WTC11 (cell line): ENCODE measurements at regions of chr13 and their contacts with region 1.

Region 1: DNA sequence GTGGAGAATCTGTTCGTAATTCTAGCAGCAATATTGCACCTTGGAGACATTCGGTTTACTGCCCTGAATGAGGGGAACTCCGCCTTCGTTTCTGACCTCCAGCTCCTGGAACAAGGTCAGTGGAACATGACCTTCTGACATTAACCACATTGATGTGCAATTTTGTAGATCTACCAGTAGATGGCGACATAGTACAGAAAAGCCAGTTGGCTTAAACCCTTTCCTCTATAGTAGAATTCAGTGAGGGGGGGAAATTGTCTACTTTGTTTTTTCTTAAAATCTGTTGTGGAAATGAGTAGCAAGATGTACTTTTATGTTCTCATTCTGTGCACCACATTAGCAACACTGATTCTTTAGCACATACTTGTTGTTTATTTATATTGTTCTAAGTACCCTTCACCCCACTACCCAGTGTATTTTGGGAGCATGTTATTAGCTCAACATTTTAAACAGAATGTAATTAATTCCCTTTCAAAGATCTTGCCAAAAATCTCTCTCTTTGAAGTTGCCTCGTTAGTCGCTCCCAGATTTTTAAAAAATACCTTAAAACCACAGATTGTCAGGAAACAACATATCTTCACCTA is 332.2 kb downstream of the MYO16 start:
- DNase-seq: no peak
- ATAC-seq: peak; percentile 88
- H3K4me3 Mint-ChIP-seq: no peak overlapping the region
- H3K27ac Mint-ChIP-seq: no peak overlapping the region
- H3K4me1 Mint-ChIP-seq: peaks cover 4% of the 10 kb centered on the region
- H3K27me3 Mint-ChIP-seq: no peaks in the 10 kb centered on the region
- CTCF ChIP-seq: peak; percentile 84

Region 2: GRCh38 chr13:108915634-108916512 is 45.8 kb before region 1 on chr13:
- CTCF ChIA-PET with region 1: interaction called, 14 read pairs
- POLR2A ChIA-PET with region 1: no interaction called
- DNase-seq: peak; percentile 47
- ATAC-seq: no peak; the same call in 1 of the 2 replicates
- H3K4me3 Mint-ChIP-seq: no peak overlapping the region
- H3K27ac Mint-ChIP-seq: 0 out of 2 replicates have a peak overlapping the region, but pooled peaks have one; percentile 25
- H3K4me1 Mint-ChIP-seq: peaks cover 26% of the 10 kb centered on the region
- H3K27me3 Mint-ChIP-seq: no peaks in the 10 kb centered on the region
- CTCF ChIP-seq: no peak

Region 3: DNA sequence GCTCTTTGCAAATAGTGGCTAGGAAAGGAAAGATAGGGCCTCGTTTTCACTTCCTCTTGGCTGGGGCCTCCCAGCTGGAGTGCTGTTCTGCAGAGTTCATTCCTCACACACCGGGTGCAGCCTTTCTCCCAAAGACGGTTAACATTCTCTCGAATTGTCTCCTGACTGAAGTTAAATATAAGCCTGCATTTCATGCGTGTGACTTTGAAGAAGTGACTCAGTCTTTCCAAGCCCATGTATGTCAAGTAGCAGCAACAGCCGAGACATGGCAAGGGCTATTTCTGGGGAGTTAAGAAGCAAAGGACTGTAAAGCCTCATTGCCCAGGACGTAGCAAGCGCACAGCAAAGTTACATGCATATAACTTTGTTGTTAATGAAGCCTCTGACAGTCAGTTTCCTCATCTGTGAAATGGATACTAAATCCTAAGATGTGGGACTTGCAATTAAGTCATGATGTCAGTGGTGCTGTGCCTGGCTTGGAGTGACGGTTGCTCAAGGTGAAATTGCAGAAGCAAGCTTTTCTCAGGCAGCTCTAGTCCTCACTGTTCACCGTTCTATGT is 170.1 kb after region 1 on chr13:
- CTCF ChIA-PET with region 1: interaction called, 20 read pairs
- POLR2A ChIA-PET with region 1: no interaction called
- DNase-seq: no peak
- ATAC-seq: peak; percentile 64
- H3K4me3 Mint-ChIP-seq: no peak overlapping the region
- H3K27ac Mint-ChIP-seq: no peak overlapping the region; the same call in 1 of the 2 replicates
- H3K4me1 Mint-ChIP-seq: peaks cover 22% of the 10 kb centered on the region
- H3K27me3 Mint-ChIP-seq: no peaks in the 10 kb centered on the region
- CTCF ChIP-seq: no peak

Region 4: DNA sequence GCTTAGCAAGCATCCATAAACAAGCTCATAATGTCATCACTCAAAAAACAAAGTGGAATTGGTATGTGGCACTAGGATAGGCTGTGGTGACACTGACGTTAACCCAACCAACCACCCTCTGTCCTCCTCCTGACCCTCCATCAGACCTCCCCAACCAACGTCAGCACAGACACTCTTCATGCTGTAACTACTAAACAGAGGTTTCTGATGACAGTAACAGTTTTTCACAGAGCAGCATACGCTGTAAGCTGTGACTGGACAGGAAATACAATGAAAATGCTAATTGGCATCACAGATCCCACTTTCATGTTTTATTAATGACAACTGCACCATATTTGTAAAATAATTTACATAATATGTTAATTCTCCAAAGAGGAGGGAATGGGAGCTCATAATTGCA is 586.7 kb after region 1 on chr13:
- CTCF ChIA-PET with region 1: no interaction called
- POLR2A ChIA-PET with region 1: interaction called, 11 read pairs
- DNase-seq: no peak
- ATAC-seq: no peak
- H3K4me3 Mint-ChIP-seq: no peak overlapping the region
- H3K27ac Mint-ChIP-seq: no peak overlapping the region
- H3K4me1 Mint-ChIP-seq: peaks cover 33% of the 10 kb centered on the region
- H3K27me3 Mint-ChIP-seq: no peaks in the 10 kb centered on the region
- CTCF ChIP-seq: no peak